ACHN (cell line): ENCODE measurements at regions of chr5 and their contacts with region 1.

Region 1: DNA sequence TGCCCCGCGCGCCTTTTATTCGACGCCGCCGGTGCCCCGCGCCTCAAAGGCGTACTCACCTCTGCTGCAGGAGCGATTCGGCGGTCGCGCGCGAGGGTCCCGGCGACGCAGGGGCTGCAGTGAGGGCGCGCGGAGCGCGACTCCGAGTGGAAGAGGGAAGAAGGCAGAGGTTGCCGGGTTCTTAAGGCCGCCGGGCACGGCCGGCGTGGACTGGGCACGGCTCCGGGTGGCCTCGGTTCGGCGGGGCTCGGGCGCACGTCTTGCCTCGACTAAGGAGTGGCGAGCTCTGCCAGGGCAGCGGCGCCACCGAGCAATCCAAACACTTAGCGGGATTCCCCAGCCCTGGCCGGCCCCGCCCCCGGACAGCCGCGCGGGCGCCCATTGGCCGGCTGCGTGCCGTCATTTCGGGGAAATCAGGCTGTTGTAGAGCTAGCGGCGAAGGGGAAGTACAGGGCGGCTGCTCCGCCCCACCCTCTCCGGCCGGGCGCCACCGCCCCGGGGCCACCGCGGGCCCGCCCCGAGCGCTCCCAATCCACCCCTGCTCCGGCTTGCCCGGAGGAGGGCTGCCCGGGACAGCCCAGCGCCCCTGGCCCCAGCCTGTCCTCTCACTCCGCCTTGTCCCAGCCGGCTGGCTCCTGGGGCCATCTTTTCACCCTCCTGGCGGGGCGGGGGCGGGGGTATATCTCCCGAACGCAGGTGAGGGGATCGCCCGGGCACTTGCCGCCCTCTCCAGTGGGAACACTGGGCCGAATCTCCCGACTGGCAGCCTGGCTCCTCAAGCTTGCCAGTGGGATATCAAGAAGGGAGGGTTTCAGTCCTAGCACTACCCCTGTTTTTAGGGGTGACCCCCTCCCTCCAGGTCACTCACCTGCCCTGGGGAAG is at the start of gene IRF1:
- DNase-seq: peak; percentile 93

Region 2: DNA sequence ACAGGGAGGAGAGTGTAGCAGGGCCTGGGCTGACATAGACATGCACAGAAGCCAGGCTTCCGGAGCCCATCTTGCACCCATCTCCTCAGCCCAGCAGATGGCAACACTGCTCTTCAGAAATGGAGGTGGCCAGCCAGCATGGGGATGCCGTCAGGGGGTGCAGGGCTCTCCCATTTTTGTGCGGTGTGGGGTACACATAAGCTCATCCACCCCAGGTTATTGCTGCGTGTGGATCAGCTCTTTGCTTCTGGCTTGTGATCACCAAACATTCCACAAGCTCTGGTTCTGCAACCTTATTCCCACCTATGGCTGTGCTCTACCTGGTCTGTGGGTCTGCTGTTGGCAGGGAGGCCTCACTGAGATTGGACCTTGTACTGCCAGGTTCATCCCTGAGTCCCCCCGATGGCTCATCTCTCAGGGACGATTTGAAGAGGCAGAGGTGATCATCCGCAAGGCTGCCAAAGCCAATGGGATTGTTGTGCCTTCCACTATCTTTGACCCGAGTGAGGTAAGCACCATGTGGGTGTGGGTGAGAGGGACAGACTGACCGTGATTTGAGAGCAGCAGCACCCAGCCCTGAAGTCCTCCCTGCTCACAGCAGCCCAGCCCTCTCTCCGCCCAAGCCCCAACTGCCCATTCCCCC is 104.0 kb before region 1 on chr5:
- in situ Hi-C with region 1: loop called (anchors 25 kb)
- DNase-seq: peak; percentile 78

Region 3: GRCh38 chr5:132673939-132674630 is 183.4 kb after region 1 on chr5 and contains the start of gene IL4:
- in situ Hi-C with region 1: no loop called
- DNase-seq: no peak